ENCODE measurements at regions of chr20 and their contacts with region 1.

Region 1: DNA sequence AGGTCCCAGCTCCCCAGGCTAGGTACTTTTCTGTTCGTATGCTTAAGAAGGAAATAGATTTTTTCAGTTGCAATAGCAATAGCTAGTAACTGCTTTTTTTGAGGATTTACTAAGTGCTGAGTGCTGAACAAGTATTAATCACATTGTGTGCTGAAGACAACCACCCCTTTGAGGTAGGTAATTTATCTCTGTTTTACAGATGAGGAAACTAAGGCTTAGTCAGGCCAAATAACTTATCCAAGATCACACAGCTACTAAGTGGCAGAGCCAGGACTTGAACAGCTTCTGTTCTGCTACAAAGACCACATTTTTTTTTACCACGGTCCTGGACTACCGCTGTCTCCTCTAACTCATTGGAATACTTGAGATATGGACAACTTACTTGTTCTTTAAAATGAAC is 39.8 kb downstream of the LRRN4 start:
- DNase-seq: no peak
- H3K4me3 ChIP-seq: no peak overlapping the region
- H3K27ac ChIP-seq: no peak overlapping the region
- H3K4me1 ChIP-seq: peaks cover 4 to 34% of the 10 kb centered on the region in 2 donors
- H3K27me3 ChIP-seq: no peaks in the 10 kb centered on the region
- CTCF ChIP-seq: no peak
- POLR2A ChIP-seq: no peak

Region 2: DNA sequence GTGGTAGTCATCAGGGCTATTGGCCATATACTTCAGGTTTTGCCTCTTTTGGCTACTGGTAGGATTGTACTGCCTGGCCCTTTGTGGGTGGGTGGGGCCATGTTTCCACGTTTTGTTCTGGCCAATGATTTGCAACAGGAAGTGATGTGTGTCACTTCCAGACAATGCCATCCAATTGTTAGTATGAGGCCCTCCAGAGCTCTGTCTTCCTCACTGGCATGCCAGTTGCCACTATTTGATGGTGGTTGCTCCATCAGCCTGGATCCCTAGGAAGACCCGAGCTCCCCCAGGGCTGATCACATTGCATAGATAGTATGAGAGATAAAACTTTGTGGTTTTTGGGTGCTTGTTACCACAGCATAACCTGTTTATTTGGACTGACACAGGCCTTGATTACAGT is 47.5 kb after region 1 on chr20:
- intact Hi-C with region 1: loop called in 1 of 2 experiments (anchors 10 kb)
- DNase-seq: no peak
- H3K4me3 ChIP-seq: no peak overlapping the region
- H3K27ac ChIP-seq: no peak overlapping the region
- H3K4me1 ChIP-seq: no peaks in the 10 kb centered on the region
- H3K27me3 ChIP-seq: no peaks in the 10 kb centered on the region
- CTCF ChIP-seq: no peak
- POLR2A ChIP-seq: no peak

Region 3: DNA sequence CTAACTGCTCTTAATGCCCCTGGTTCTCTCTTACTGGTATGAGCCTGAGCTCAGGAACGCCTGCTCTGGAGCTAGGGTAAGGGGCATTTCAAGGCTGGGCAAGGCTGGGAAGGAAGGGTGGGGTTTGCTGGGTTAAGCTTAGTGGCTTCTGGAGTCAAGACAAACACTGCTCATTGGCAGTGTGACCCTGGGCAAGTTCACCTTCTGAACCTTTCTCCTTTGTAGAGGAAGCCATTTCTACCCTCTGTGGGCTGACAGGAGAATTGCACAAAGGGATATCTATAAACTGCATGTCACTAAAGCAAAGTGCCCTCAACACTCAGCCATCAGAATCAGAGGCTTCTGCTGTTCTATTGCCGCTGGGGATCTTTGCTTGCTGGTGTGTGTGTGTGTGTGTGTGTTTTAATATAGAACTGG is 60.1 kb after region 1 on chr20:
- intact Hi-C with region 1: loop called (anchors 10 kb)
- DNase-seq: peak in 3 of 7 donors; percentile 23 to 61 (median 33)
- H3K4me3 ChIP-seq: no peak overlapping the region
- H3K27ac ChIP-seq: peak overlapping the region in 4 of 5 donors; percentile 41 to 87 (median 54)
- H3K4me1 ChIP-seq: peaks cover 20 to 28% of the 10 kb centered on the region in 2 donors
- H3K27me3 ChIP-seq: no peaks in the 10 kb centered on the region
- CTCF ChIP-seq: peak in 4 of 6 experiments; percentile 20 to 53 (median 32)
- POLR2A ChIP-seq: no peak